ENCODE measurements at regions of chr6 and their contacts with region 1.

Region 1: DNA sequence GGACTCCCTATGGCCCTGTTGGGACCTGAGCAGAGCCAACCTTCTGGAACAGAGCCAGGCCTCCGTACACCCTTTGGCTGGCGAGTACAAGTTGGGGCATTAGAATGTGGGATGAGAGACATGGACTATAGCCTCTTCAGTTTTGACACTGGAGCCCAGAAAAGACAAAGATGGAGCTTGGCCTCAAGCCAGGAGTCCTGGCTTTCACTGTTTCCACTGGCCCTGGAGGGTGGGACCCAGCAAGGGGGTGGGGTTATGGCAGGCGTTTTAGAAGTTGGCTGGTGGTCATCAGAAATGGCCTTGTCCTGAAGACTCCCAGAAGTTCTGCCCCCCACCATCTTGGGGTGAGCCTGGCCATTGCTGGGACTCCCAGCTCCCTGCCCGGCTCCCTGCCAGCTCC is 21.8 kb downstream of the ITPR3 start:
- DNase-seq: no peak
- ATAC-seq: no peak
- H3K4me3 ChIP-seq: no peak overlapping the region
- H3K27ac ChIP-seq: no peak overlapping the region
- H3K4me1 ChIP-seq: no peaks in the 10 kb centered on the region; the same call in 1 of the 2 replicates
- H3K27me3 ChIP-seq: no peaks in the 10 kb centered on the region
- CTCF ChIP-seq: no peak
- EP300 ChIP-seq: no peak
- POLR2A ChIP-seq: no peak
- RAD21 ChIP-seq: no peak

Region 2: GRCh38 chr6:33161354-33162331 is 481.3 kb before region 1 on chr6:
- CTCF ChIA-PET with region 1: no interaction called
- POLR2A ChIA-PET with region 1: no interaction called
- RAD21 ChIA-PET with region 1: no interaction called
- SMC1A ChIA-PET with region 1: no interaction called
- in situ Hi-C with region 1: no loop called
- intact Hi-C with region 1: no loop called
- DNase-seq: no peak
- ATAC-seq: peak; percentile 96
- H3K4me3 ChIP-seq: peak overlapping the region; percentile 70; the same call in 1 of the 2 replicates
- H3K27ac ChIP-seq: no peak overlapping the region
- H3K4me1 ChIP-seq: peaks cover 4% of the 10 kb centered on the region
- H3K27me3 ChIP-seq: no peaks in the 10 kb centered on the region
- CTCF ChIP-seq: peak; percentile 89 to 97 (median 96); a peak in 5 of 6 replicates
- EP300 ChIP-seq: no peak
- POLR2A ChIP-seq: no peak
- RAD21 ChIP-seq: peak; percentile 64

Region 3: DNA sequence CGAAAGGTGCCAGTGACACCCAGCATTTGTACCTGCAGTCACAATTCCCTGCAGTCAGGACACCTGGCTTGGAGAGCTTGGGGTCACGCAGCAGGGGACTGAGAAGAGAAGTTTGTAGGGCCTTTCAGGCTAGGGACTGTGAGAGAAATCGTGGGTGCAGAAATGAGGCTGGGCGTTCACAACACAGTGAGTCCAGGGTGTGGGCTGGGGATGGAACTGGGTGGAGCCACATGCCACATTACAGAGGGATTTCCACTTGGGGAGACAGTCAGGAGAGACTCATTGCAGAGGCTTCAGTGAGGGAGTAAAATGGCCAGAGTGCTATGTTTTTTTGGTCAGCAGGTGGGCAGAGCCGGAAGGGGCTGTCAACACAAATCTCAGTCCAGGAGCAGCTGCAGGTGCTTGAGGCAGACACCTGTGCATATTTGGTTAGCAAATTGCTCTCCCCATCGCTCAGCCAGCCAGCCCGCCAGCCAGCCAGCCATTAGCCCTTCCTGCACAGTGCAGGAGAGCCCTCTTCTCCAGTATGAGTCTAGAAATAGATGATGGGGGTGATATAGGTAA is 14.4 kb before region 1 on chr6:
- CTCF ChIA-PET with region 1: no interaction called
- POLR2A ChIA-PET with region 1: no interaction called
- RAD21 ChIA-PET with region 1: no interaction called
- SMC1A ChIA-PET with region 1: no interaction called
- in situ Hi-C with region 1: no loop called
- intact Hi-C with region 1: no loop called
- DNase-seq: no peak
- ATAC-seq: peak; percentile 10; the same call in 2 of the 3 replicates
- H3K4me3 ChIP-seq: no peak overlapping the region
- H3K27ac ChIP-seq: no peak overlapping the region
- H3K4me1 ChIP-seq: peaks cover 26% of the 10 kb centered on the region
- H3K27me3 ChIP-seq: no peaks in the 10 kb centered on the region
- CTCF ChIP-seq: no peak
- EP300 ChIP-seq: no peak
- POLR2A ChIP-seq: no peak
- RAD21 ChIP-seq: no peak

Region 4: DNA sequence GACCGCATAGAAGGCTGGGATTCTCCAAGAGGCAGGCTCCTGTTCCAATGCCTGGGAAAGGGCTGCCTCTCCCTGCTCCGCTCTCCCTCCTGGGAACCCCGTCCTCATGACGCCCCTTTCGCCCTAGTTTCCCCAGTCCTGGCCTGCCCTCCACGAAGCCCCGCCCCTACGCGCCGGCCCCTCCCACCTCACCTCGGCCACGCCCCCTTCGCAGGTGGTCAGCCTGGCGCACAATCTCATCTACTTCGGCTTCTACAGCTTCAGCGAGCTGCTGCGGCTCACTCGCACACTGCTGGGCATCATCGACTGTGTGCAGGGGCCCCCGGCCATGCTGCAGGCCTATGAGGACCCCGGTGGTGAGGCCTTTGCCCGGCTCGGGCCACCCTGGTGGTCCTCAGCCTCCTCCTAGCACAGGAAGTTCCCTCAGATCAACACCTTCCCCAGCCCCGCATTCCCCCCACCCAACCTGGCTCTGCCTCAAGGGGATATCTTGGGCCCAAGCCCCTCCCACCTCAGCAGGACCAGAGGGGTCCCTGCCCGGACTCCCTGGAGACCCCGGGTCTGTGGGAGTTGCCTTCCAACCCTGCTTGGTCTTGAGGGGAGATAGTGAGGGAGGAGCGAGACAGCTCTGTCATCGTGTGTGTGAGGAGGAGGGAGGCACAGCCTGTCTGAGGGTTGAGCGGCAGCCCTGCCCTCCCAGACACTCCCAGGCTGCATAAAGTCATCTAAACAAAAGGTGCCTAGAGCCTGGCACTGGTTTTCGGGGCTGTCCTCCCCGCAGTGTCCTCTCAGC is 28.2 kb after region 1 on chr6:
- CTCF ChIA-PET with region 1: no interaction called
- POLR2A ChIA-PET with region 1: no interaction called
- RAD21 ChIA-PET with region 1: no interaction called
- SMC1A ChIA-PET with region 1: no interaction called
- in situ Hi-C with region 1: no loop called
- intact Hi-C with region 1: loop called (anchors 1 kb)
- DNase-seq: no peak
- ATAC-seq: no peak
- H3K4me3 ChIP-seq: no peak overlapping the region
- H3K27ac ChIP-seq: no peak overlapping the region
- H3K4me1 ChIP-seq: no peaks in the 10 kb centered on the region
- H3K27me3 ChIP-seq: no peaks in the 10 kb centered on the region
- CTCF ChIP-seq: no peak
- EP300 ChIP-seq: no peak
- POLR2A ChIP-seq: no peak
- RAD21 ChIP-seq: no peak